GM12878 (cell line): ENCODE measurements at regions of chr17 and their contacts with region 1.

Region 1: DNA sequence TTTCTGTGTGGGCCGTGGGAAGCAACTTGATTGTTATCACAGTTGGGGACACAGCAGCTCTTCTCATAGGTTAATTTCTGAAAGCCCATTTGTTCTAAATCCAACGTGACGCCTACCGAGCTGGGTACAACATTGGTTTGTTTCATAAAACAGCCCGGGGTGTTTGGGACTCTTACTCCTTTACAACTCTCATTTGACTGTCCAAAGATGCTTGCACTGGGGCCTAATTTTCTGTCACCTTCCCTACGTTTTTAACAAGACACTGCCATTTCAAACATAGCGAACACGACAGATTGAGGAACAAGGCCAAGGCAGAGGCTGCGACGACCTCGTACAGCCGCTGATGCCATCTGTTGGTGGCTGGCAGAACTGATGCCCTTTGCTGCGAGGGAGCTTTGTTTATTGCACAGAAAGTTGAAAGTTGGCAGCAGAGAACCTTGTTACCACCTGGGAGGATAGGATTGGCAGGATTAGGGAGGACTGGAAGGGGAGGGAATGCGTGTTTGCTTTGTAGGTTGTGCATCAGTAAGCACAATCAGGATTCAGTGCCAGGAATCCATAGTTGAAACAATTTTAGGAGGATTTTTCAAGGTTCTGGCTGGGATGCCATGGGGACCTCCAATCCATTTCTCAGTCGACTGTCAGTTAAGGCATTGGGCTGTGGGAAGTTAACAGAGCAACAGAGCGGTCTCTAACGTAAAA is 98.3 kb downstream of the PITPNC1 start:
- DNase-seq: peak; percentile 53
- ATAC-seq: peak; percentile 98
- H3K4me3 ChIP-seq: no peak overlapping the region; the same call in 1 of the 2 replicates
- H3K27ac ChIP-seq: peak overlapping the region; percentile 36; the same call in 1 of the 2 replicates
- H3K4me1 ChIP-seq: peaks cover 21% of the 10 kb centered on the region
- H3K27me3 ChIP-seq: no peaks in the 10 kb centered on the region
- CTCF ChIP-seq: peak; percentile 95 to 99 (median 96); a peak in 5 of 6 replicates
- EP300 ChIP-seq: no peak
- POLR2A ChIP-seq: no peak
- RAD21 ChIP-seq: peak; percentile 96

Region 2: GRCh38 chr17:67390646-67391384 is 84.6 kb before region 1 on chr17:
- CTCF ChIA-PET with region 1: interaction called, 291 read pairs
- POLR2A ChIA-PET with region 1: interaction called, 4 read pairs
- RAD21 ChIA-PET with region 1: interaction called, 44 read pairs
- SMC1A ChIA-PET with region 1: interaction called, 48 read pairs
- in situ Hi-C with region 1: no loop called
- intact Hi-C with region 1: no loop called
- DNase-seq: peak; percentile 87
- ATAC-seq: peak; percentile 97
- H3K4me3 ChIP-seq: peak overlapping the region; percentile 24; the same call in 1 of the 2 replicates
- H3K27ac ChIP-seq: peak overlapping the region; percentile 80
- H3K4me1 ChIP-seq: peaks cover 36% of the 10 kb centered on the region
- H3K27me3 ChIP-seq: no peaks in the 10 kb centered on the region
- CTCF ChIP-seq: peak in 1 of 3 experiments; percentile 8; a peak in 1 of 6 replicates
- EP300 ChIP-seq: peak; percentile 78 to 85; a peak in 3 of 4 replicates
- POLR2A ChIP-seq: peak; percentile 41; the same call in 1 of the 2 replicates
- RAD21 ChIP-seq: peak; percentile 9; the same call in 1 of the 2 replicates

Region 3: DNA sequence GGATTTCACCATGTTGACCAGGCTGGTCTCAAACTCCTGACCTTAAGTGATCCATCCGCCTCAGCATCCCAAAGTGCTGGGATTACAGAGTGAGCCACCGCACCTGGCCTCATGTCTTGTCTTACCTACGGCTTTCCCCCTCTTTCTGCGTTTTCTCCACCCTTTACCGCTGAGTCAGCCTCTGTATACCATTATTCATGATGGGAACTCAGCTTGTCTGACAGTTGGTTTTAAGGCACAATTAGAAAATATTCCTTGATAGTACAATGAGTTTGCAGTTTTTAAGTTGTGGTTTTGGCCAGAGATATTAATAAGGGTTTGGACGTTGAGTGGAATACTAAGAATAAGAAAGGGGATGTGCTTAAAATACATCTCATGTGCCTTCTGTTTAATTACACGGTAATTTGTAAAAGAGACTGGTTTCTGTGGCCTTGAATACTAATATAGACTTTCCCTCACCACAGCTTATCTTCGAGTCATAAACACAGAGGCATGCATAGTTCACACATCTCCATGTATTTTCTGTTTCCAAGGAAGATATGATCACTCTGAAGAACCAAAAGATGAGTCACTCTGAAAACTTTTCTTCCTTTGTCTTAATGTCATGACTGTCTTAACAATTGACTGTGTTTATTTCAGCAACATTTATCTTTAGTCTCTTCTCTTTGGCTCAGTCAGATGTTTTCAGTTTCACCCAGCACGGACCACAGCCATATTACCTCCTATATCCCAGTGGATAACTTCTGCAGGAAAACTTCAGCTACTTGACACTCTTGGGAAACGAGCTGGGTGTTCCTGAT is 43.9 kb before region 1 on chr17:
- CTCF ChIA-PET with region 1: interaction called, 13 read pairs
- POLR2A ChIA-PET with region 1: interaction called, 4 read pairs
- RAD21 ChIA-PET with region 1: interaction called, 3 read pairs
- SMC1A ChIA-PET with region 1: interaction called, 5 read pairs
- in situ Hi-C with region 1: no loop called
- intact Hi-C with region 1: no loop called
- DNase-seq: no peak
- ATAC-seq: peak; percentile 86
- H3K4me3 ChIP-seq: 0 out of 2 replicates have a peak overlapping the region, but pooled peaks have one; percentile 5
- H3K27ac ChIP-seq: peak overlapping the region; percentile 69
- H3K4me1 ChIP-seq: peaks cover 29% of the 10 kb centered on the region
- H3K27me3 ChIP-seq: no peaks in the 10 kb centered on the region
- CTCF ChIP-seq: no peak
- EP300 ChIP-seq: peak; percentile 77 to 80
- POLR2A ChIP-seq: no peak
- RAD21 ChIP-seq: no peak

Region 4: DNA sequence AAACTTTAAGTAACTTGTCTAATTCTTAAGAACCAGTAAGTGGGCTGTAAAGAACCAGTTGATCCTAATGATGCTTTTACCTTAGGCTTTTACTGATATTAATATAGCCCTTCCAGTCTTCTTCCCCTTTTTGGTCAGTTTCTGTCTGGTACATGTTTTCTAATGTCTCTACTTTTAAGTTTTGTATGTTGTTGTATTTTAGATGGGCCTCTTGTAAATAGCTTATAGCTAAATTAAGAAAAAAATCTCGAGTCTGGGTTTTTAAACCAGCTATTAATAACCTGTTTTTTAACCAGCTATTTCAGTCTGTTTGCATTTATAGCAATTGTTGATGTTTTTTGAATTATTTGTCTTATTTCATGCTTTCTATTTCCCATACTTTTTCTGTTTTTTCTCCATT is 19.3 kb before region 1 on chr17:
- CTCF ChIA-PET with region 1: interaction called, 13 read pairs
- POLR2A ChIA-PET with region 1: no interaction called
- RAD21 ChIA-PET with region 1: interaction called, 4 read pairs
- SMC1A ChIA-PET with region 1: interaction called, 8 read pairs
- in situ Hi-C with region 1: no loop called
- intact Hi-C with region 1: no loop called
- DNase-seq: no peak
- ATAC-seq: peak; percentile 63
- H3K4me3 ChIP-seq: peak overlapping the region; percentile 4; the same call in 1 of the 2 replicates
- H3K27ac ChIP-seq: peak overlapping the region; percentile 35; the same call in 1 of the 2 replicates
- H3K4me1 ChIP-seq: peaks cover 34% of the 10 kb centered on the region
- H3K27me3 ChIP-seq: no peaks in the 10 kb centered on the region
- CTCF ChIP-seq: no peak
- EP300 ChIP-seq: no peak
- POLR2A ChIP-seq: no peak
- RAD21 ChIP-seq: no peak

Region 5: GRCh38 chr17:67488161-67488560 is 12.8 kb after region 1 on chr17:
- CTCF ChIA-PET with region 1: interaction called, 13 read pairs
- POLR2A ChIA-PET with region 1: no interaction called
- RAD21 ChIA-PET with region 1: no interaction called
- SMC1A ChIA-PET with region 1: interaction called, 13 read pairs
- in situ Hi-C with region 1: no loop called
- intact Hi-C with region 1: no loop called
- DNase-seq: no peak
- ATAC-seq: no peak
- H3K4me3 ChIP-seq: no peak overlapping the region
- H3K27ac ChIP-seq: no peak overlapping the region
- H3K4me1 ChIP-seq: peaks cover 10% of the 10 kb centered on the region
- H3K27me3 ChIP-seq: no peaks in the 10 kb centered on the region
- CTCF ChIP-seq: no peak
- EP300 ChIP-seq: no peak
- POLR2A ChIP-seq: no peak
- RAD21 ChIP-seq: no peak

Region 6: GRCh38 chr17:67559377-67559966 is 84.1 kb after region 1 on chr17:
- CTCF ChIA-PET with region 1: interaction called, 8 read pairs
- POLR2A ChIA-PET with region 1: no interaction called
- RAD21 ChIA-PET with region 1: interaction called, 4 read pairs
- SMC1A ChIA-PET with region 1: interaction called, 11 read pairs
- in situ Hi-C with region 1: no loop called
- intact Hi-C with region 1: no loop called
- DNase-seq: no peak
- ATAC-seq: peak; percentile 90
- H3K4me3 ChIP-seq: no peak overlapping the region
- H3K27ac ChIP-seq: no peak overlapping the region
- H3K4me1 ChIP-seq: peaks cover 5% of the 10 kb centered on the region
- H3K27me3 ChIP-seq: no peaks in the 10 kb centered on the region
- CTCF ChIP-seq: peak; percentile 53 to 66 (median 60)
- EP300 ChIP-seq: no peak
- POLR2A ChIP-seq: no peak
- RAD21 ChIP-seq: peak; percentile 65

Region 7: GRCh38 chr17:67629971-67630320 is 154.6 kb after region 1 on chr17:
- CTCF ChIA-PET with region 1: interaction called, 16 read pairs
- POLR2A ChIA-PET with region 1: interaction called, 5 read pairs
- RAD21 ChIA-PET with region 1: no interaction called
- SMC1A ChIA-PET with region 1: interaction called, 3 read pairs
- in situ Hi-C with region 1: no loop called
- intact Hi-C with region 1: no loop called
- DNase-seq: no peak
- ATAC-seq: peak; percentile 72
- H3K4me3 ChIP-seq: no peak overlapping the region
- H3K27ac ChIP-seq: no peak overlapping the region; the same call in 1 of the 2 replicates
- H3K4me1 ChIP-seq: peaks cover 15% of the 10 kb centered on the region
- H3K27me3 ChIP-seq: no peaks in the 10 kb centered on the region
- CTCF ChIP-seq: peak; percentile 47 to 53 (median 52); a peak in 4 of 6 replicates
- EP300 ChIP-seq: no peak
- POLR2A ChIP-seq: no peak
- RAD21 ChIP-seq: peak; percentile 68